Left cardiac atrium (tissue), 4 donors: ENCODE measurements at regions of chr16 and their contacts with region 1.

Region 1: GRCh38 chr16:58000706-58001676 is at the start of gene USB1:
- DNase-seq: peak; percentile 88
- ATAC-seq: peak; percentile 95
- total RNA-seq, gene USB1: 32.3 to 37.7 TPM

Region 2: GRCh38 chr16:57757326-57757786 is 243.6 kb before region 1 on chr16:
- intact Hi-C with region 1: loop called in 1 of 2 experiments (anchors 5 kb)
- DNase-seq: peak; percentile 91
- ATAC-seq: peak; percentile 86 to 94

Region 3: GRCh38 chr16:57834936-57835335 is 166.1 kb before region 1 on chr16:
- intact Hi-C with region 1: no loop called
- DNase-seq: no peak
- ATAC-seq: no peak

Region 4: DNA sequence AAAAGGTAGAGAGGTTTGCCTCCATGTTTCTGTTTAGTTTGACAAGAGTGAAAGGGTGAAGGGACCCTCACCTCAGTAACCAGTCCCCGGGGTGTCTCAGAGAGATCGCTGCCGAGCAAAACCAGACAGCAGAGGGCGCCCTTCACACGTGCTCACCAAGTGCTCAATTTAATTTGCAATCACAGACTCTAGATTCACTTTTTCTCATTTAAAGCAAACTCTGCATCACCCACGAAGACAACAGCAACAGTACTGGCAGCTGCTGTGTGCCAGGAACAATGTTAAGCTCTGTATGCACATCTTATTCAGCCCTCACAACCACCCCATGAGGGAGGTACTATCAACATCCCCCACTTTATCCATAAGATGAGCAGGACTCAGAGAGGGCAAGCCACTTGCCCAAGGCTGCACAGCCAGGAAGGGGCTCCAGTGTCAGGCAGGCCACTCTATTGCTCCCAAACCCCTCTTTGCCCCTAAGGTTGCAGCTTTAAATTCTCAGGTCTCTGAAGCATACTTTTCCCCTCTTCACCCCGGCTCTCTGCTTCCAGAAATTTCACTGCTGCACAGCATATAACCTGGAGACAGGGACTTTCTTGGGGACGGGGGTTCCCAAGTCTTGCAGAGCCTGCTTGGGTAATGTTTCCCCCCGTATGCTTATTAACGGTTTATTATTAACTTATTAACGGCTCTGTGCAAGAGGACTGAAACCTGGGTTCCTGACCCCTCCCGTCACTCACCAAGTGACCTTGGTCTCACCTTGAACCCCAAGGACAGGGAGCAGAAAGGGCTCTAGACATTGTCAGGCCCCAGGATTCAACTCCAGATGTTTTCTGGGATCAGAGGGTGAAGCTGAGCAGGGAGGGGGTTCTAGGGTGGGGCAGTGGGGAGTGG is 101.0 kb before region 1 on chr16:
- intact Hi-C with region 1: loop called (anchors 2 kb)
- DNase-seq: peak; percentile 78
- ATAC-seq: peak; percentile 79 to 82

Region 5: GRCh38 chr16:58125781-58126335 is 124.9 kb after region 1 on chr16:
- intact Hi-C with region 1: no loop called
- DNase-seq: no peak
- ATAC-seq: no peak